Dendritic cell treated with granulocyte-macrophage colony-stimulating factor and Interleukin-4, amounts not matched to agents 40 ng/mL and 50 ng/mL, for 4 days (primary cell): ENCODE measurements at regions of chr22 and their contacts with region 1.

Region 1: GRCh38 chr22:19479357-19480172 is at the start of gene CDC45:
- H3K4me3 Mint-ChIP-seq: peak within 1 kb of the TSS; percentile 88
- H3K27ac Mint-ChIP-seq: peak within 1 kb of the TSS; percentile 97
- H3K4me1 Mint-ChIP-seq: peaks cover 33% of the 10 kb centered on the region
- H3K27me3 Mint-ChIP-seq: no peaks in the 10 kb centered on the region

Region 2: GRCh38 chr22:19143967-19144400 is 335.6 kb before region 1 on chr22:
- intact Hi-C with region 1: loop called (anchors 10 kb)
- H3K4me3 Mint-ChIP-seq: peak overlapping the region; percentile 100
- H3K27ac Mint-ChIP-seq: peak overlapping the region; percentile 94
- H3K4me1 Mint-ChIP-seq: peaks cover 14% of the 10 kb centered on the region
- H3K27me3 Mint-ChIP-seq: peaks cover 30% of the 10 kb centered on the region

Region 3: DNA sequence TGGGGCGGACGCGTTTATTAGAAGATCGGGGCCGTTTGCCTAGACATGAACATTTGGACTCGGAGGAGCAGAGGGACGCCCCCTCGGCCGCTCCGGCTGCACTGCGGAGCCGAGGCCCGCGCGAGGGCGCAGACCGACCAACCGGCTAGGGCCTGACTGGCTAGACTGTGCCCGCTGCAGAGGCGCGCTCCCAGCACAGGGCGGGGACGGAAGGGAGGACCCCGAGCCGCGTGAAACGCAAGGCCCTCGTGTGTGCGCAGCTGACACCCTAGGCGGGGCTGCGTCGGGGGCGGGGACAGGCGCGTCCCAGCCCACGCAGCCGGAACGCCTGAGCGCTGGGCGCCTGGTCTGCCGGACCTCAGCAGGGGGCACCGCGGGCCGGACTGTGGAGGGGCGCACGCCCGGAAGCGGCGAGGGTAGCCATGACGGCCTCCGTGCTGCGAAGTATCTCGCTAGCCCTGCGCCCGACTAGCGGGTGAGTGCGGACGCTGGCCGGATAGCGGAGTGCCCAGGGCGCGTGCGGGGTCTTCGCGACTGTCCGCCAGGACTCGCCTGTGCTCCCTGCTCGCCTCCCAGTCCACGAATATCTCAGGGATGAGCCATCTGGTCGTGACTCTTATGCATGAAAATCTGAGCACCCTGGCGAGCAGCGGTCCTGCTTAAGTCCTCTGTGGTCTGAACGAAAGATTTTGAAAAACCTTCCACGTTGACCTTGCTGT is 47.3 kb before region 1 on chr22 and contains the start of gene MRPL40:
- intact Hi-C with region 1: loop called (anchors 1 kb)
- H3K4me3 Mint-ChIP-seq: peak within 1 kb of the TSS; percentile 85
- H3K27ac Mint-ChIP-seq: peak within 1 kb of the TSS; percentile 97
- H3K4me1 Mint-ChIP-seq: peaks cover 52% of the 10 kb centered on the region
- H3K27me3 Mint-ChIP-seq: no peaks in the 10 kb centered on the region

Region 4: DNA sequence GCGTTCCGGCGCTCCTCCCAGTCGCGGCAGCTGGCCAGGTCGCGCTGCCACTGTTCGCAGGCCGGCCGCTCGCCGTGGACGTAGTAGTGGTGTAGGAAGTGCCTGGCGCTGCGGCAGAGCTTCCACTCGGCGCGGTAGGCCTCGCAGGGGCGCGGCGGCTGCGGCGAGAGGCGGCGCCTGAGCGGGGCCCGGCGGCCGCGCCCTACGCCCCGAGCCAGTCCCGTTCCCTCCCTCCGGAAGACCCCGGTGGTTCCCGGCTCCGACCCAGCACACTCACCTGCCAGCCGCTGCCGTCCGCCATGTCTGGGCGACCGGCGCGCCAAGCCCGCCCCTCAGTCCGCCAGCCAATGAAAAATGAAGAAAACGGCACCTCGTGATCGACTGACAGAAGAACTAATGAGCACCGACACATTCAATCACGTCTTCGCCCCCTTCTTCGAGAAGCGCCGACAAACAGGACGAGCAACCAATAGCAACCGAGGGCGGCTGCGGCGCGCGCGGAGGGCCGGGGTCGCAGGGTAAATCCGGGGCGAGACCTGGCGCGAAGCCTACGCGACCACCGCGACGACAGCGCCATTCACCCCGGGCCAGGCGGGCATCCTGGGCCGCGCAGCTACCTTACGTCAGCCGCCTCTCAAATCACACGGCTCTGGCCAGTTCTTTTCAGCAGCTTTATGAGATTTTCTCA is 32.0 kb before region 1 on chr22 and contains the start of gene C22orf39:
- intact Hi-C with region 1: loop called (anchors 1 kb)
- H3K4me3 Mint-ChIP-seq: peak within 1 kb of the TSS; percentile 96
- H3K27ac Mint-ChIP-seq: peak within 1 kb of the TSS; percentile 82
- H3K4me1 Mint-ChIP-seq: peaks cover 41% of the 10 kb centered on the region
- H3K27me3 Mint-ChIP-seq: no peaks in the 10 kb centered on the region

Region 5: DNA sequence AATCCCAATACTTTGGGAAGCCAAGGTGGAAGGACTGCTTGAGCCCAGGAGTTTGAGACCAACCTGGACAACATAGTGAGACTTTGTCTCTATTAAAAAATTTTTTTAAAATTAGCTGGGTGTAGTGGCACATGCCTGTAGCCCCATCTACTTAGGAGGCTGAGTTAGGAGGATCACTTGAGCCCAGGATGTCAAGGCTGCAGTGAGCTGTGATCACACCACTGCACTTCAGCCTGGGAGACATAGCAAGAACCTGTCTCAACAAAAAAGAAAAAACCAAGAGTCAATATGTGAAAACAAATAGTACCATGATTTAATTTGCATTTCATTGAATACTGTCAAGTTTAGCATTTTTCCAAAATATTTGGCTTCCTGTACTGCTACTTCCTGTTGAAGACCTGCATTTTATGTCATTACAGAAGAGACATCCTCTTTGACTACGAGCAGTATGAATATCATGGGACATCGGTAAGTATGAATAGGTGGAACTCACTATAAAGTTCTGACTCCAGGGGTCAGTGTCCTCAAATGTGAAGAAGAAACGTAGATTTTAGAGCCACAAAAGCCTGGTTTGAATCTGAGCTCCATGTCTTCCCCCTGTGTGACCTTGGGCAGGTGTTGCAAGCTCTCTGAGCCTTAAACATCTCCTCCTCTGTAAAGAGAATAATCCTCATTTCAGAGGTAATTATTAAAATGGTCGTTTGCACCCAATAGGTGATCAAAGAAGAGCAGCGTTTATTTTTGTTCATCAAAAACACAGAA is 16.2 kb after region 1 on chr22:
- intact Hi-C with region 1: no loop called
- H3K4me3 Mint-ChIP-seq: no peak overlapping the region
- H3K27ac Mint-ChIP-seq: no peak overlapping the region
- H3K4me1 Mint-ChIP-seq: no peaks in the 10 kb centered on the region
- H3K27me3 Mint-ChIP-seq: no peaks in the 10 kb centered on the region